ENCODE measurements at regions of chr13 and their contacts with region 1.

Region 1: DNA sequence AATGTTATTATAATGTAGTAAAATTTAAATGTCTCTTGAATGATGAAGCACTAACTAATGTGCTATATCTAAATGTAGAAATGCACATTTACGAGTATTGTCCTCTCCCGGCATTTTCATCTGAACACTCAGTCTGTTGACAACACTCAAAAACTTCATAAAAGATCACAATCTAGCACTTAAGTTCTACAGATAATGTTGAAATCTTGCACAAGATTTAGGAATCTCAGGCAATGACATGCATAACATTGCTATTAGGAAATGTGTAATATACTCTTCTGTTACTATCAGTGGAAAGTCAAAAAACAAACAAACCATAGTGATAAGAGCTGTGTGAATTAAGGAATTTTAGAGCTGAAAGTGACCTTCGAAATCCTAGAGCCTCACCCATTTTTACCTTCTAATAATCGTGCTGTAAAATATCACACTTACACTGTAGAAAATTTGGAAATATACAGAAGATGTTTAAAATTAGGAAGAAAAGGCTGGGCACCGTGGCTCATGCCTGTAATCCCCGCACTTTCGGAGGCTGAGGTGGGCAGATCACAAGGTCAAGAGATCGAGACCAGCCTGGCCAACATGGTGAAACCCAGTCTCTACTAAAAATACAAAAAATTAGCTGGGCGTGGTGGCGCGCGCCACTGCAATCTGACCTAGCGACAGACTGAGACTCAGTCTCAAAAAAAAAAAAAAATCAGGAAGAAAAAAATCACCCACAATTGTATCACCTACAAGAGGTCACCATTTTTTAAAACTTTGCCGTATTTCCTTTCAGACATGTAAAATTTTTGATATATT is 37.7 kb upstream of the XPO4 start:
- DNase-seq: no peak
- H3K4me3 ChIP-seq: no peak overlapping the region
- H3K27ac ChIP-seq: peak overlapping the region in 2 of 4 donors; percentile 2 to 16
- H3K4me1 ChIP-seq: peaks cover 0 to 28% (median 18%) of the 10 kb centered on the region in 3 donors
- H3K27me3 ChIP-seq: no peaks in the 10 kb centered on the region
- CTCF ChIP-seq: no peak
- POLR2A ChIP-seq: no peak

Region 2: GRCh38 chr13:21130116-21130515 is 189.8 kb after region 1 on chr13:
- intact Hi-C with region 1: loop called (anchors 5 kb)
- DNase-seq: no peak
- H3K4me3 ChIP-seq: no peak overlapping the region
- H3K27ac ChIP-seq: no peak overlapping the region
- H3K4me1 ChIP-seq: no peaks in the 10 kb centered on the region
- H3K27me3 ChIP-seq: no peaks in the 10 kb centered on the region
- CTCF ChIP-seq: no peak
- POLR2A ChIP-seq: no peak